ENCODE measurements at regions of chr6 and their contacts with region 1.

Region 1: DNA sequence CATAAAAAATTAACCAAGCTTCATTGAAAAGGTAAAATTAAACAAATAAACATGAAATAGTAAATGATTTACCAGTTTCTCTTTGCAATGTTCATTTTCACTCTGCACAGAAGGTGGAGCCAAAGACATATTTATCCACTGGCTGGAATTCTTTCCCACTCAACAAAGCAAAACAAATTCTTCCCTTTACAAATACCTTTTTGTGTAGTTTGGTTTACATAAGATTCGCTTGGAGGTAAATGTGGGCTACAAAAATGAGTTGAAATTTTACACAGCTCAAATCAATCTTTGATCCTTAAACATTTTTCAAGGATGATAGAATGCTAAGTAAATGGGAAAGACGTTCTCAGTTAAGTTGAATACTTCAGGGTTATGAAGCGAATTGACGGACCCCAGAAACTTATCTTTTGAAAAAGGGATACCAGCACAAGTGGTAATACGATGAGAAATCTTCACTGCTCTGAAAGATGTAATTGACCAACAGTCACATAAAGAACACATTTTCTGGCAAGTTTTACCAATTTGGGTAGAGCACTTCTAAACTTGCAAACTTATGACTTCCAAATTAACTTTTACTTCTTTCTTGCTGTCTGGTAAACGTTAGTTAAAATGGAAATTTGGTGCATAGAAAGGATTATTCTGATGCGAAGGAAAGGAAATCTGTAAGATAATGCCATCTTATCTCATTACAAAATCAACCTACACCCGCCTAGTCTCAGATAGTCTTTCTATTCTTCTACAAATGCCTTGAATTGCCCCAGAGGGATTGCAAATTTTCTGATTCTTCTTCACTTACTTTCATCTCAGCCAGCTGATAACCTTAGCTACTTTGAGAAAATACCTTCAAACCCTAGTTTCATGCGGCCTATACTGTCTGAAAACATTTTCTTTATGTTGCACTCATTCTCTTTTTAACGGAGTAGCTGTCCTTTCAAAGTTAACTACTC is 4.7 kb upstream of the GJA1 start:
- DNase-seq: peak in 1 of 4 experiments; percentile 7
- ATAC-seq: no peak
- H3K4me3 ChIP-seq: no peak overlapping the region
- H3K27ac ChIP-seq: no peak overlapping the region
- H3K4me1 ChIP-seq: no peaks in the 10 kb centered on the region; a peak in 1 of 5 replicates
- H3K27me3 ChIP-seq: no peaks in the 10 kb centered on the region; a peak in 1 of 5 replicates
- CTCF ChIP-seq: peak; percentile 17 to 67 (median 25); a peak in 3 of 6 replicates
- EP300 ChIP-seq: no peak
- POLR2A ChIP-seq: no peak
- RAD21 ChIP-seq: peak; percentile 66 to 83

Region 2: GRCh38 chr6:121748376-121748775 is 317.6 kb after region 1 on chr6:
- CTCF ChIA-PET with region 1: no interaction called
- POLR2A ChIA-PET with region 1: no interaction called
- in situ Hi-C with region 1: no loop called
- intact Hi-C with region 1: loop called (anchors 10 kb)
- DNase-seq: no peak
- ATAC-seq: no peak
- H3K4me3 ChIP-seq: no peak overlapping the region
- H3K27ac ChIP-seq: no peak overlapping the region
- H3K4me1 ChIP-seq: no peaks in the 10 kb centered on the region
- H3K27me3 ChIP-seq: no peaks in the 10 kb centered on the region
- CTCF ChIP-seq: no peak
- EP300 ChIP-seq: no peak
- POLR2A ChIP-seq: no peak
- RAD21 ChIP-seq: no peak

Region 3: GRCh38 chr6:121849477-121849876 is 418.7 kb after region 1 on chr6:
- CTCF ChIA-PET with region 1: no interaction called
- POLR2A ChIA-PET with region 1: no interaction called
- in situ Hi-C with region 1: no loop called
- intact Hi-C with region 1: loop called (anchors 2 kb)
- DNase-seq: peak; percentile 40 to 58 (median 48)
- ATAC-seq: peak; percentile 56; the same call in 2 of the 3 replicates
- H3K4me3 ChIP-seq: no peak overlapping the region
- H3K27ac ChIP-seq: no peak overlapping the region
- H3K4me1 ChIP-seq: no peaks in the 10 kb centered on the region
- H3K27me3 ChIP-seq: no peaks in the 10 kb centered on the region
- CTCF ChIP-seq: peak; percentile 31 to 47 (median 36); a peak in 5 of 6 replicates
- EP300 ChIP-seq: no peak
- POLR2A ChIP-seq: no peak
- RAD21 ChIP-seq: peak; percentile 22 to 26; a peak in 2 of 4 replicates

Region 4: DNA sequence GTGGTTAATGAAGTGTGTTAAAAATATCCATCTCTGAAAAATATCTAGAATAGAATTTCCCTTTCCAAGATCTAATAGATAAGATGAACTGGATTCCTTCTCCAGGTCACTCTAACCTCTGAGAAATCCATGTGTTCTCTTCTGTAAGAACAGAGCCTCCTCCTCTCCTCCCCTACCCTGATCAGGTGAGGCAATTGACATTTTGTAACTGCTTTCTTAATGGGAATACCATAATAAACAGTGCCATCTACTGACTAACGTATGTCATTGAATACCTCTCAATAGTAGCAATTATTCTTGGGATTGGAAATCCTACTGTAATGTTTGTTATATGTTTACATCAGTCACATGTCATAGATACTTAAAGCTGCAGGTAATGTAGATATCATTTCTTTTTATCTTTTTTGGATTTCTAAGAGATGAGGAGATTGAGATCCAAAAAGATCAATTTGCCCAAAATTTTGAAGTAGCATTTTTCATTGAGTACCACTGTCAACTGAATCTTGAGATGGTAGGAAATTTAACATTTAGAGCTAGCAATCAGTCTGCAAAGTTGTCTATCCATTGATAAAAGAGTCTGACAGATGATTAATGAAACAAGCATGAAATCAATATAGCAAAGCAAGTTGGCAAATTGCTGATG is 602.9 kb after region 1 on chr6:
- CTCF ChIA-PET with region 1: interaction called, 3 read pairs
- POLR2A ChIA-PET with region 1: no interaction called
- in situ Hi-C with region 1: no loop called
- intact Hi-C with region 1: loop called (anchors 1 kb)
- DNase-seq: peak; percentile 14 to 27 (median 16)
- ATAC-seq: peak; percentile 59; the same call in 2 of the 3 replicates
- H3K4me3 ChIP-seq: no peak overlapping the region
- H3K27ac ChIP-seq: no peak overlapping the region
- H3K4me1 ChIP-seq: no peaks in the 10 kb centered on the region
- H3K27me3 ChIP-seq: no peaks in the 10 kb centered on the region
- CTCF ChIP-seq: peak in 2 of 3 experiments; percentile 39 to 45; a peak in 3 of 6 replicates
- EP300 ChIP-seq: no peak
- POLR2A ChIP-seq: no peak
- RAD21 ChIP-seq: peak; percentile 55 to 68

Region 5: DNA sequence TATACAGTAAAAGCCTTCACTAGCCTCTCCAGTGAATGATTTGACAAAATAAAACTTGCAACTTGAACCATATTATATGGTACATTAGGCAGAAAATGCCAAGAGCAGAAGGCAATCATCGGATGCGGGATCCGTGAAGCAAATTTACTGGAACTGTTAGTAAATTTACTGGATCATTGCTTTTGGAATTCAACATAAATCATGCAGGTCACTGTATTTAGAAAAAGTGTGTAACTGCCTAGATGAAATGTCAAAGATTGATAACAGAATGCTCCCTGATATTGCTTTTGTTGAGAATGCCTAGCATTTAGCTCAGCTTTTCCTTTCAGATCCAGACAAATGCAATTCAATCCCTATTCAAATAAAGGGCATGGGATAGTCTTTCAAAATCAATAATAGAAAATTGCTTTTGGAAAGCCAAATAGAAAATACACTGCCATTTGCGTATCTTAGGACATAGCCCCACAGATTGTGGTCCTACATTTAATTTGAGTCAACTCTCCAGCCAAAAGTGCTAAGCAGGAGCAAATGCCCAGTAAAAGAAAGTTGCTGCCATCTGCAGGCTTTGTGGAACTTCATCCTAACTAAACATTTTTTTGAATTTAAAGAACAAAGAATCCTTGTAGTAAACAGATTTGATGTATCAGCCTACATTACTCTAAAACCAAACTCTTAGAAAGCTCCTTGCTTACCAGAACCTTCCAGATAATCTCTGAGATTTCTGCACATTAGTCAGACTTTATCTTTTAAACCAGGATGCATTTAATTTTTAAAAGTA is 859.2 kb after region 1 on chr6:
- CTCF ChIA-PET with region 1: no interaction called
- POLR2A ChIA-PET with region 1: no interaction called
- in situ Hi-C with region 1: no loop called
- intact Hi-C with region 1: loop called (anchors 5 kb)
- DNase-seq: peak in 1 of 4 experiments; percentile 10
- ATAC-seq: no peak
- H3K4me3 ChIP-seq: no peak overlapping the region
- H3K27ac ChIP-seq: no peak overlapping the region
- H3K4me1 ChIP-seq: no peaks in the 10 kb centered on the region
- H3K27me3 ChIP-seq: no peaks in the 10 kb centered on the region
- CTCF ChIP-seq: no peak
- EP300 ChIP-seq: no peak
- POLR2A ChIP-seq: no peak
- RAD21 ChIP-seq: peak in 1 of 2 experiments; percentile 50; a peak in 2 of 4 replicates

Region 6: DNA sequence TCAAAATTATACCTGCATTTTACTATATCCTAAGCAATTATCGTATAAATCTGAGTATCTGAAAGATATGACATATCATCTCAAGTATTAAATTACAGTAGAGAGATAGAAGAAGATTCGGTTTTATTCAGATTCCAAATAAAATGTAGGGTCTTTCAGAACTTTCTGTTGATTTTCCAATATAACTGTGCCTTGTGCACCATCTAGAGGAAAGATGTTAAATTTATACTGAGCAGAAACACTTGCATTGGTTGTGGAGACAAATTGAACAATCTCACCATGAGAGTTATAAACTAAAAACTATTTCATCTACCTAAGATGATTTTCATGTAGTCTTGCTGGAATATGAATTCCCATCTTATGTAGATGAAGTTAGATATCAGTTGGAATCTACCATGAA is 941.9 kb after region 1 on chr6:
- CTCF ChIA-PET with region 1: no interaction called
- POLR2A ChIA-PET with region 1: no interaction called
- in situ Hi-C with region 1: no loop called
- intact Hi-C with region 1: loop called (anchors 5 kb)
- DNase-seq: no peak
- ATAC-seq: no peak
- H3K4me3 ChIP-seq: no peak overlapping the region
- H3K27ac ChIP-seq: no peak overlapping the region
- H3K4me1 ChIP-seq: no peaks in the 10 kb centered on the region
- H3K27me3 ChIP-seq: no peaks in the 10 kb centered on the region
- CTCF ChIP-seq: peak in 1 of 3 experiments; percentile 33; a peak in 2 of 6 replicates
- EP300 ChIP-seq: no peak
- POLR2A ChIP-seq: no peak
- RAD21 ChIP-seq: peak in 1 of 2 experiments; percentile 38; a peak in 1 of 4 replicates

Region 7: DNA sequence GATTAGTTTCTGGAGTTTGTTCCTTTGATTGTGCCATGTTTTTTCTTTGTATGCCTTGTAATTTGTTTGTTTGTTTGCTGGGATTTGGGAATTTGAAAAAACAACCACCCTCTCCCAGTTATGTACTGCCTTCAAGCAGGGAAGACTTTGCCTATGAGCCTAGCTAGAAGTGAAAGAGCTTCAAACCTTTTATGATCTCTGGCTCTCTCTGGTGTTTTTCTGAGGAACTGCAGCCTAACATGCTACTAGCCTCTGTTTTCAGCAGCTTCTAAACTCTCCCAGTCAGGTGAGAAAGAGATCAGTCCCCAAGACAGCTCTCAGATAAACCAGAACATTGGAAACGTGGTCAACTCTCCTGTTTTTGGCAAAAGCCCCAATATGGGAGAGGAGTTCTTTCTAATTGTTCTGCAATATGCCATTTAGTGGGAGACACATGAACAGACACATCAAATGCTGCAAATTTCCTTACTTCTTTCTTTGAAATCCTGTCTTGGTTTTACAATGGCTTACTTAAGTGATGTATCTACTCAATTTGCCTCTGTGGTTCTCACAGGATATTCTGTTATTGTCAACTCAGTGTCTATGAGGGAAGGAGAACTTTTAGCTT is 1099.8 kb after region 1 on chr6:
- CTCF ChIA-PET with region 1: interaction called, 3 read pairs
- POLR2A ChIA-PET with region 1: no interaction called
- in situ Hi-C with region 1: no loop called
- intact Hi-C with region 1: loop called (anchors 5 kb)
- DNase-seq: peak; percentile 51 to 73 (median 56)
- ATAC-seq: peak; percentile 96
- H3K4me3 ChIP-seq: no peak overlapping the region
- H3K27ac ChIP-seq: no peak overlapping the region
- H3K4me1 ChIP-seq: no peaks in the 10 kb centered on the region
- H3K27me3 ChIP-seq: no peaks in the 10 kb centered on the region
- CTCF ChIP-seq: peak; percentile 72 to 86 (median 76)
- EP300 ChIP-seq: no peak
- POLR2A ChIP-seq: no peak
- RAD21 ChIP-seq: peak; percentile 83 to 95